ENCODE measurements at regions of chr5 and their contacts with region 1.

Region 1: GRCh38 chr5:139446956-139447779 is 7.8 kb upstream of the DNAJC18 start:
- DNase-seq: peak; percentile 66
- ATAC-seq: peak; percentile 74
- H3K4me3 Mint-ChIP-seq: no peak overlapping the region
- H3K27ac Mint-ChIP-seq: peak overlapping the region; percentile 81
- H3K4me1 Mint-ChIP-seq: peaks cover 65% of the 10 kb centered on the region
- H3K27me3 Mint-ChIP-seq: no peaks in the 10 kb centered on the region

Region 2: GRCh38 chr5:139368613-139369012 is 78.6 kb before region 1 on chr5:
- CTCF ChIA-PET with region 1: no interaction called
- DNase-seq: no peak
- ATAC-seq: no peak
- H3K4me3 Mint-ChIP-seq: no peak overlapping the region
- H3K27ac Mint-ChIP-seq: no peak overlapping the region
- H3K4me1 Mint-ChIP-seq: peaks cover 31% of the 10 kb centered on the region
- H3K27me3 Mint-ChIP-seq: no peaks in the 10 kb centered on the region

Region 3: GRCh38 chr5:139458580-139459406 is 11.6 kb after region 1 on chr5:
- CTCF ChIA-PET with region 1: interaction called, 17 read pairs
- DNase-seq: peak; percentile 96
- ATAC-seq: peak; percentile 86
- H3K4me3 Mint-ChIP-seq: peak overlapping the region; percentile 51
- H3K27ac Mint-ChIP-seq: peak overlapping the region; percentile 86
- H3K4me1 Mint-ChIP-seq: peaks cover 63% of the 10 kb centered on the region
- H3K27me3 Mint-ChIP-seq: no peaks in the 10 kb centered on the region